Activated CD8-positive, alpha-beta T cell treated with anti-CD3 and anti-CD28 coated beads for 36 hours (primary cell): ENCODE measurements at regions of chr1 and their contacts with region 1.

Region 1: GRCh38 chr1:61049850-61050540 is 32.4 kb upstream of the NFIA start:
- DNase-seq: peak; percentile 93
- ATAC-seq: peak; percentile 88
- H3K4me3 Mint-ChIP-seq: peak overlapping the region; percentile 69
- H3K27ac Mint-ChIP-seq: no peak overlapping the region
- H3K4me1 Mint-ChIP-seq: peaks cover 26% of the 10 kb centered on the region
- H3K27me3 Mint-ChIP-seq: peaks cover 38% of the 10 kb centered on the region
- CTCF ChIP-seq: peak; percentile 87

Region 2: DNA sequence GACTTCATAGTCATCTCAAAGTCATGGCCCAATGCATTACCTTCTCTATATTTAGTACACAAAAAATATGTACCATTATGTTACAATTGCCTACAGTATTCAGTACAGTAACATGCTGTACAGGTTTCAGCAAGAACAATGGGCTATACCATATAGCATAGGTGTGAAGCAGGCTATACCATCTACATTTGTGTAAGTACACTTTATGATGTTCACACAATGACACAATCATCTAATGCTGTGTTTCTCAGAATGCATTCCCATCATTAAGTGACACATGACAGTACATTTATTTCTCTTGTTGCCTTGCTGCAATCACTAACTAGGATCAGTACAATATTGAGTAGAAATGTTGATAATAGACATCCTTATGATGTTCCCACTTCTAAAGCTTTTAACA is 14.1 kb before region 1 on chr1:
- CTCF ChIA-PET with region 1: interaction called, 15 read pairs
- POLR2A ChIA-PET with region 1: no interaction called
- intact Hi-C with region 1: no loop called
- DNase-seq: no peak
- ATAC-seq: no peak
- H3K4me3 Mint-ChIP-seq: no peak overlapping the region
- H3K27ac Mint-ChIP-seq: no peak overlapping the region
- H3K4me1 Mint-ChIP-seq: no peaks in the 10 kb centered on the region
- H3K27me3 Mint-ChIP-seq: peaks cover 7% of the 10 kb centered on the region
- CTCF ChIP-seq: no peak

Region 3: DNA sequence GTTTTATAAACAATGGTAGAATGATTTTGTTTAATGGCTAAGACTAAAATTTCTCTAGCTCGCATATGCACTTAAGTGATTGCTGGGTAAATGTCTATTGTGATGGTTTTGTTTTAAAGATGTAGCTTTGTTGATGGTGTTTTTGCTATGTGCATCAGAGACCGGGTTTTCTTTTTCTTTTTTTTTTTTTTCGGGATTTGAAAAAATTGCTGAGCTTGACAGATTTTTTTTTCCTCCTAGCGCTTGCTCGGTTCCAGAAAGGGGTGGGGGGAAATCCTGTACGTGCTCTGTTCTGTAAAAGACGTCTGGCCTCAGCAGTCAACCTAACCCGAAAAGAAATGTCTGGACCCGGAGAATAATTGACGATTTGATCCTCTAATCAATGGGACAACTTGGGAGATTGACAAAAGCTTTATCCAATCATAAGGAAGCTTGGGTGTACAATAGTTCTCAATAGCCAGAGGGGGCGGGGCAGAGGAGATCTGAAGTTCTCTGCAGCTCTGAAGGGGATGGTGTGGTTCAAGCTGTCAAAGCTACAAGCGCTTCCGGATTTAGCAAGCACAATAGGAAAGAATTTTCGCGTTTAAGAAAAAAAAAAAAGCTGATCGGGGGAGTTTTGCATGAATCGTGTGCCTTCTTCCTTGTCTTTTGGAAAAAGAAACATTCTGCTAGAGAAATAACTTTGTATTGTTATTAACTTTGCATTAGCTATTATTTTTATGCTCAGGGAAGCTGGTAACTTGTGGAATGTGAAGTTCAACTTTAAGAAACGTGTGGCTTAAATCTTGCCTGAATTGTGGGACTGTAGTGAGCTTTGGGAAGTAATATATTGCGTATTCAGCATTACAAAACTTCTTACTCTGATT is 27.9 kb after region 1 on chr1:
- CTCF ChIA-PET with region 1: interaction called, 46 read pairs
- POLR2A ChIA-PET with region 1: interaction called, 7 read pairs
- intact Hi-C with region 1: loop called (anchors 2 kb)
- DNase-seq: peak; percentile 97
- ATAC-seq: peak; percentile 84
- H3K4me3 Mint-ChIP-seq: peak overlapping the region; percentile 91
- H3K27ac Mint-ChIP-seq: peak overlapping the region; percentile 90
- H3K4me1 Mint-ChIP-seq: peaks cover 45% of the 10 kb centered on the region
- H3K27me3 Mint-ChIP-seq: peaks cover 3% of the 10 kb centered on the region
- CTCF ChIP-seq: no peak

Region 4: GRCh38 chr1:61124696-61125095 is 74.7 kb after region 1 on chr1:
- CTCF ChIA-PET with region 1: interaction called, 10 read pairs
- POLR2A ChIA-PET with region 1: no interaction called
- intact Hi-C with region 1: no loop called
- DNase-seq: no peak
- ATAC-seq: no peak
- H3K4me3 Mint-ChIP-seq: no peak overlapping the region
- H3K27ac Mint-ChIP-seq: no peak overlapping the region
- H3K4me1 Mint-ChIP-seq: no peaks in the 10 kb centered on the region
- H3K27me3 Mint-ChIP-seq: no peaks in the 10 kb centered on the region
- CTCF ChIP-seq: no peak

Region 5: GRCh38 chr1:61141288-61142042 is 91.5 kb after region 1 on chr1:
- CTCF ChIA-PET with region 1: no interaction called
- POLR2A ChIA-PET with region 1: no interaction called
- intact Hi-C with region 1: no loop called
- DNase-seq: no peak
- ATAC-seq: no peak
- H3K4me3 Mint-ChIP-seq: no peak overlapping the region
- H3K27ac Mint-ChIP-seq: no peak overlapping the region
- H3K4me1 Mint-ChIP-seq: peaks cover 6% of the 10 kb centered on the region
- H3K27me3 Mint-ChIP-seq: no peaks in the 10 kb centered on the region
- CTCF ChIP-seq: no peak

Region 6: GRCh38 chr1:61163355-61163754 is 113.4 kb after region 1 on chr1:
- CTCF ChIA-PET with region 1: interaction called, 14 read pairs
- POLR2A ChIA-PET with region 1: no interaction called
- intact Hi-C with region 1: no loop called
- DNase-seq: no peak
- ATAC-seq: no peak
- H3K4me3 Mint-ChIP-seq: no peak overlapping the region
- H3K27ac Mint-ChIP-seq: no peak overlapping the region
- H3K4me1 Mint-ChIP-seq: peaks cover 12% of the 10 kb centered on the region
- H3K27me3 Mint-ChIP-seq: no peaks in the 10 kb centered on the region
- CTCF ChIP-seq: no peak

Region 7: GRCh38 chr1:61337981-61338848 is 288.2 kb after region 1 on chr1:
- CTCF ChIA-PET with region 1: interaction called, 3 read pairs
- POLR2A ChIA-PET with region 1: no interaction called
- intact Hi-C with region 1: loop called (anchors 10 kb)
- DNase-seq: no peak
- ATAC-seq: no peak
- H3K4me3 Mint-ChIP-seq: no peak overlapping the region
- H3K27ac Mint-ChIP-seq: no peak overlapping the region
- H3K4me1 Mint-ChIP-seq: no peaks in the 10 kb centered on the region
- H3K27me3 Mint-ChIP-seq: no peaks in the 10 kb centered on the region
- CTCF ChIP-seq: peak; percentile 10

Region 8: DNA sequence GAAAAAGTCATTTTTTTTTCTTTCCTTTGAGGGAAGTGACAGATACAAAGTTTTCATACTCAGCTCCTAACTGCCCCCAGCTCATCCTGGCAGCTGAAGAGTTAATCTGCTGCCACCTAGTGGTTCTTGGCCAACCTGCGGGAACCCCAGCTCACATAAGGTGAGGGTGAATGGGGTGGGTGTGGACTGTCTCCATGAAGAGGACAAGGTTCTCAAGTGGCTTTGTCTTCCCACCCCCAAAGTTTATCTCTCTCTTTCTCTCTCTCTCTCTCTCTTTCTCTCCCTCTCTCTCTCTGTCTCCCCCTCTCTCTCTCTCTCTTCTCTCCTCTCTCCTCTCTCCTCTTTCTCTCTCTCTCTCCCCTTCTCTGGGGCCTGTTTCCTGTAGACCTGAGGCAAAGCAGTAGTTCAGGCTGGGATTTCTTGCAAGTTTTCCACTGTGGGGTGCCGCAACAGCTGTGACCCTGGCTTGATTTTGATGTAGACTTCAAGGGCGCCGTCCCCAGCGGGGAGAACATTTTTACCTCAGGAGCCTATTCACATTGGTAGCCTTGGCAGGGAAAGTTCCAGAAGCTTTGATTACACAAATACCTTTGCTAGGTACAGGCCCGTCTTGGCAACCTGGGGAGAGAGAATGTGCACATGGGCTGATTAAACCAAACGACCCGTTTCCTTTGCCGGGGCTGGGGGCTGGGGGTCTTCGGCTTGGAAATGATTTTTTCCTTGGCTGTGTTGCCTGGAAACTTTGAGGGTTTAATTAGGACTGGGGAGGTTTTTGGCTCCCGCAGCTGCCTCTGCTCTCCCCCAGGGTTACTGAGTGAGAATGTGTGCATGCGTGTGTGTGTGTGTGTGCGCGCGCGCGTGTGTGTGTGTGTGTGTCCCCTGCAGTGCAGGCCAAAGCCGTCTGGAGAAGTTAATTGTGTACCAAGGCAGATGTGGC is 539.0 kb after region 1 on chr1:
- CTCF ChIA-PET with region 1: interaction called, 13 read pairs
- POLR2A ChIA-PET with region 1: no interaction called
- intact Hi-C with region 1: loop called (anchors 10 kb)
- DNase-seq: peak; percentile 83
- ATAC-seq: peak; percentile 83
- H3K4me3 Mint-ChIP-seq: no peak overlapping the region
- H3K27ac Mint-ChIP-seq: no peak overlapping the region
- H3K4me1 Mint-ChIP-seq: no peaks in the 10 kb centered on the region
- H3K27me3 Mint-ChIP-seq: peaks cover under 1% of the 10 kb centered on the region
- CTCF ChIP-seq: peak; percentile 73